ENCODE measurements at regions of chr5 and their contacts with region 1.

Region 1: DNA sequence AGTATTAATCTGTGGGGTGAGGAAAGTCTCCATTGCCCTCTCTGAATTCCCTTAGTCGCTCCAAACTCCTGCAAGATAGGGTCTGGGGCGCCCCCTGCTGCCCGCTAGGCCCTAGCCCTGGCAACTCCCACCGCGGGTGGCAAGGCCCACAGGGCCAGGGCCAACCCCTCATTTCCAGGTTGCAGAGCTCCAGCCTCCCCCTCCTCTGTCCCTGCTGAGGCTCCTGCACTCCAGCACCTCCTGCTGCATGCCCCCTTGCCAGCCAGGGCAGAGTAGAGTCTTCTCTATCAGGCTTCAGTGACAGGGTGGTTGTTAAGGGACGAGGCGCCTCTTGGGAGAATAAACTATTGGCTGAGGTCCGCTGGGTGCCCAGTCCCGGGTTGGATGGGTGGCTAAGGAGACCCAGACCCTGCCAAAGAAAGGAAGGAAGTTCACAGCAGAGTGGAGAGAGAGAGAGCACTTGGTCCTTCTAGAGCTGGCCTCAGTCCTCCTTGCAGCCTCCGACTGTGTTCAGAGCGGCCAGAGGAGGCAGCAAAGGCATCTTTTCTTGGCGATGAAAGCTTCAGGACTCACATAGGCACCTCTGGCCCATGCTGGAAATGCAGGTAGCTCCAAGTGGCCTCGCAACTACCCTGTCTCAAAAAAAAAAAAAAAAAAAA is 45.6 kb downstream of the SAR1B start:
- DNase-seq: peak; percentile 83
- CTCF ChIP-seq: peak; percentile 92

Region 2: DNA sequence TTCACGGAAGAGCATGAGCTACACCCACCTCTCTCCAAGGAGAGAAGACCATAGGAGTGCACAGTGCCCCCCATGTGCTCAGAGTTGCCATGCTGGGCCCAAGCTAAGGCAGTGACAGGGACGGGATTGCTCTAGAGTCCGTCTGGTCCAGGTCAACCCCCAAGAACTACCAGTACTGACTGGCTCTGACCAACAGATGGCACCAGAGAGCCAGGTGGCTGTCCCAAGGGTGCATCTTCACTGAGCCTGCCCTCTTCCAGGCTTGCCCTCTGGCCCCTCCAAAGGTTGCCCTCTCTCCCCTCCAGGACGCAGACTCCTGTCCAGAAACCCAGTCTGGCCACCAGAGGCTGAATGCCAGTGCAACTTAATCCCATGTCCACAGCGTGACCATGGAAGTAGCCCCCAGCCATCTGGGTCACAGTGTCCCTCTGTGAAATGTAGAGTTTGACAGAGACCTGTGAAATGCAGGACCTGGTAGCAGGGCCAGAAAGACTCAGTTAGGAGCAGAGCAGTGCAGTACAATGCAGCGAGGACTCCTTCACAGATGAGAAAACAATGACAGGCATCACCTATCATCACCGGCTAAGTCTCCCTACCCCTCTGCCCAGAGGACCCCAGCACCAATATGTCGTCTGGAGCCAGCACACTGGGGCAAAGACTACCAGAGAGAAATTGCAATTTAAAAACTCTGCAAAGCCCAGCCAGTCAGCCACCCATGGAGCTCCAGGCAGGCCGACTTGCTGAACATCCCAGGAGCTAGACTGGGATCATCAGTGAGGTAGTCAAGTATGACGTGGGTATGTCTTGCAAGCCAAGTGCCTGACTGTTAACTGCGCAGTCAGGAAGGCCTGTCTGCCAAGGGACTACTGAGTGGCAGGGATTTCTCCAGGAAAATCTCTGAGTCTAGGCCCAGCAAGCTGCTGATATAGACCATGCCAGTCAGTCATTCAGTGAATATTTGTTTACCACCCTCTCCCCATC is 402.6 kb before region 1 on chr5:
- CTCF ChIA-PET with region 1: interaction called, 11 read pairs
- POLR2A ChIA-PET with region 1: no interaction called
- DNase-seq: peak; percentile 84
- CTCF ChIP-seq: peak; percentile 93

Region 3: DNA sequence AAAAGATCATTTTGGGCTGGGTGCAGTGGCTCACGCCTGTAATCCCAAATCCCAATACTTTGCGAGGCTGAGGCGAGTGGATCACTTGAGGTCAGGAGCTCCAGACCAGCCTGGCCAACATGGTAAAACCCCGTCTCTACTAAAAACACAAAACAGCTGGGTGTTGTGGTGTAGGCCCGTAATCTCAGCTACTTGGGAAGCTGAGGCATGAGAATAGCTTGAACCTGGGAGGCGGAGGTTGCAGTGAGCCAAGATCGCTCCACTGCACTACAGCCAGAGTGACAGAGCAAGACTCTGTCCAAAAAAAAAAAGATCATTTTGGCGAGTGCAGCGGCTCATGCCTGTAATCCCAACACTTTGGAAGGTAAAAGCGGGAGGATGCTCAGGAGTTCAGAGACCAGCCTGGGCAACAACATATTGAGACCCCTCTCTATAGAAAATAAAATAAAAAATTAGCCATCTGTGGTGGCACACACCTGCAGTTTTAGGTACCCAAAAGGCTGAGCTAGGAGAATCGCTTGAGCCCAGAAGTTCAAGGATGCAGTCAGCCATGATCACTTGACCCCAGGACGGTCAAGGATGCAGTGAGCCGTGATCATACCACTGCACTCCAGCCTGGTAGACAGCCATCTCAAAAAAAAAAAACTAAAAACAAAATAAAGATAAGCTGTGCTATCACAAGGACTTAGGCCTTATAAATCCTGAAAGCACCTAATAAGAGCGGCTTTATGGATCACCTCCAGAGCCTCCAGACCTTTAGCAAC is 377.3 kb before region 1 on chr5:
- CTCF ChIA-PET with region 1: no interaction called
- POLR2A ChIA-PET with region 1: no interaction called
- DNase-seq: no peak
- CTCF ChIP-seq: no peak

Region 4: GRCh38 chr5:134304311-134304710 is 282.7 kb before region 1 on chr5:
- CTCF ChIA-PET with region 1: interaction called, 30 read pairs
- POLR2A ChIA-PET with region 1: no interaction called
- DNase-seq: no peak
- CTCF ChIP-seq: no peak

Region 5: DNA sequence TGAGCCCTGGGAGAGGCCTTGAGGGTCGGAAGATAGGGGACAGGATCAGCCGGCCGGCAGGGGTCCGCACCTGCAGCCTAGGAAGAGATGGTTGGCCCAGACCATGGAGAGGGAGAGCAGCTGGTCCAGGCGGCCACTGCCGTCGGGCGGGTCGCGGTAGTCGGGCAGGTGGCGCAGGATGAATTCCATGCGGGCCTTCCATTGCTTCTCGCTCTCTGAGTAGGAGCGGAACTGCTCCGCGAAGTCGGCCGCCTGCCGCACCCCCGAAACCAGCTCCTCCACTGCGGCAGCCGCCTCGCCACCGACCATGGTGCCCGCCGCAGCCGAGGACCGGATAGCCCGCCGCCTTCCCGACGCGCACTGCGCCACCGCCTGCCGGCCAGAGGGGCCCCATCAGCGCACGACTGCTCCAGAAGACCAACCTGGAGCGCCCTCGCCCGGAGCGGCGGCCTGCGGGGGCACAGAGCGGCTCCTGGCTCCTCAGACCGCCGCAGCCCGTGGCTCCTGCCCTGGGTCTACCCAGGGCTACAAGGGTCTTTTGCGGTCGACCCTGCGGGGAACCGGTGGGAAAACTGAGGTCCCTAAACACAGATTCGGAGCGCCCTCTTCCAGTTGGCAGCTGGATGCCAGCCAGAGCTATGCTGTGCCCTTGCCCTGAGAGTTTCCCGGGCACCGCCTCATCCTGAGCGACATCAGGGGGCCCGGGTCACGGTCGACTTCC is 175.3 kb before region 1 on chr5 and contains the start of gene CDKN2AIPNL:
- CTCF ChIA-PET with region 1: interaction called, 13 read pairs
- POLR2A ChIA-PET with region 1: no interaction called
- DNase-seq: peak; percentile 96
- CTCF ChIP-seq: peak; percentile 95

Region 6: GRCh38 chr5:134609232-134609851 is 22.3 kb after region 1 on chr5:
- CTCF ChIA-PET with region 1: interaction called, 17 read pairs
- POLR2A ChIA-PET with region 1: no interaction called
- DNase-seq: peak; percentile 50
- CTCF ChIP-seq: no peak

Region 7: GRCh38 chr5:134794082-134794481 is 207.1 kb after region 1 on chr5:
- CTCF ChIA-PET with region 1: no interaction called
- POLR2A ChIA-PET with region 1: no interaction called
- DNase-seq: no peak
- CTCF ChIP-seq: no peak